ENCODE measurements at regions of chr3 and their contacts with region 1.

Region 1: GRCh38 chr3:188620752-188621151 is 466.8 kb downstream of the LPP start:
- DNase-seq: no peak
- H3K4me3 ChIP-seq: no peak overlapping the region
- H3K4me3 Mint-ChIP-seq: no peak overlapping the region
- H3K27ac Mint-ChIP-seq: no peak overlapping the region
- H3K4me1 ChIP-seq: no peaks in the 10 kb centered on the region
- H3K4me1 Mint-ChIP-seq: no peaks in the 10 kb centered on the region
- H3K27me3 ChIP-seq: no peaks in the 10 kb centered on the region
- H3K27me3 Mint-ChIP-seq: no peaks in the 10 kb centered on the region
- CTCF ChIP-seq: no peak

Region 2: DNA sequence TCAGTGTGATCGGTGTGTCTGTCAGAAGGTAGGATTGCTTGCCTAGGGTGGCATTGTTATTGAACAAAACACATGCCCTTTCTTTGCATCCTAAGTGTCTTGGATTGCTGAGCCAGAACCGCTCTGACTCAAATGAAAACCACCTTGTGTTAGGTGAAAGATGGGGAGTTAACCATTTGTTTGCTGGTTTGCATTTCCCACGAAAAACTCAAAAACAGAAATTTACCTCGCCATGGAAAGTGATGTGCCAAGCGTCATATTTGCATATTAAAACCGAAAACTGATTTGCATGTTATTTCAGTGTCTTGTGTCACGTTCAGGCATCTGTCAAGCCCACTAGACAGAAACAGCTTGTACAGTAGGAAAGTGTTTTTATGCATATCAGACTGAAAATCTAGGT is 76.4 kb after region 1 on chr3:
- CTCF ChIA-PET with region 1: no interaction called
- POLR2A ChIA-PET with region 1: interaction called, 12 read pairs
- intact Hi-C with region 1: no loop called
- DNase-seq: no peak
- H3K4me3 ChIP-seq: no peak overlapping the region
- H3K4me3 Mint-ChIP-seq: no peak overlapping the region
- H3K27ac Mint-ChIP-seq: no peak overlapping the region
- H3K4me1 ChIP-seq: no peaks in the 10 kb centered on the region
- H3K4me1 Mint-ChIP-seq: no peaks in the 10 kb centered on the region
- H3K27me3 ChIP-seq: no peaks in the 10 kb centered on the region; the same call in 1 of the 2 replicates
- H3K27me3 Mint-ChIP-seq: no peaks in the 10 kb centered on the region
- CTCF ChIP-seq: no peak